Colonic mucosa (tissue), 4 donors: ENCODE measurements at regions of chr2 and their contacts with region 1.

Region 1: DNA sequence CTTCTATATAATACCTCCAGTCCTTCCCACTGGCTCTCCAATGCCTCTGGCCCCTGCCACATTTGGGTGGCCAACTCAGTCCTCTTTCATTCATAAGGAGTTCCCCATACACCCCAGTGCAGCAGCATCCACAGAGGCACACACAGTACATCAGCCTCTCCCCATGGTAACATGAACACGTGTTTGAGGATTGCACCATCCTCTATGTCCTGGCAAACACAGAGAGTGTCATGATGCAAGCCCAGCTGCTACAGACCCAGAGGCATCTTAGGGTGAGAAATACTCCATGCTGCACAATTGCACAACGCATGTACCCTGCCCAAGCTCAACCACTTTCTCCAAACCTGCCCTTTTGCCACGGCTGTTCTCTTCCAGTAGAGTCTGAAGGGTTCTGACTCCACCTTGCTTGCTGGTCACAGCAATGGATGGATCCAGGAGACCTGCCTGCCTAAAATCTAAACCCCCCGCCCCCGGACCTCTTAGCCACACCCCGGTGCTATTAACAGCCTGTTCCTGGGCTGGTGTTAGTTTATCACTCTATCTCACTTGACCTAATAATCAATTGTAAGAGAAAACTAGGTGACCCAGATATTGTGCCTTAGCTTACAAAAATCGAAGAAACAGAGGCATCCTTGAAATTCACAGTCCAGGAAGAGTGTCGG is 11.4 kb downstream of the IGFBP5 start:
- DNase-seq: no peak
- H3K4me3 ChIP-seq: no peak overlapping the region
- H3K27ac ChIP-seq: peak overlapping the region; percentile 13
- H3K4me1 ChIP-seq: no peaks in the 10 kb centered on the region
- H3K27me3 ChIP-seq: no peaks in the 10 kb centered on the region
- CTCF ChIP-seq: no peak

Region 2: GRCh38 chr2:216590780-216591179 is 93.2 kb before region 1 on chr2:
- intact Hi-C with region 1: no loop called
- DNase-seq: peak; percentile 21
- H3K4me3 ChIP-seq: no peak overlapping the region
- H3K27ac ChIP-seq: no peak overlapping the region
- H3K4me1 ChIP-seq: no peaks in the 10 kb centered on the region
- H3K27me3 ChIP-seq: no peaks in the 10 kb centered on the region
- CTCF ChIP-seq: no peak

Region 3: DNA sequence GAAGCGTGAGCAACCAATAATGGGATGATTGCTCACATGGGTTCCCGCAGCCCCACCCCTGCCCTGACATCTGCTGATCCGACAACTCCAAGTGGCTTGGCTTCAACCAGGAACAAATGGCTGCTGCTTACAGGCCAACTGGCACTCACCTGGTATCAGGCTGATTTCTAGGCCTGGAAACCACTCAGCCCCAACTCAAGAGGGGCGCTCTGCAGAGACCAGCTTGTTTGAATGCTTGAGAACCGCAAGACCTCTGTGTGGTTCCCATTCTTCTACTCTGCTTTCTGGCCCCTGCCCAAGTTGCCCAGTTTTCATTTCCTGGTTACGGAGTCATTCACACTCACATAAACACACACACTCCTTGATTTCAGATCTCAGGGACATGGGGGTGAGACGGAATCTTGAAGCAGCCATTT is 123.9 kb after region 1 on chr2:
- intact Hi-C with region 1: no loop called
- DNase-seq: no peak
- H3K4me3 ChIP-seq: no peak overlapping the region
- H3K27ac ChIP-seq: no peak overlapping the region
- H3K4me1 ChIP-seq: no peaks in the 10 kb centered on the region
- H3K27me3 ChIP-seq: no peaks in the 10 kb centered on the region
- CTCF ChIP-seq: no peak

Region 4: GRCh38 chr2:217142649-217143266 is 458.8 kb after region 1 on chr2:
- intact Hi-C with region 1: loop called (anchors 5 kb)
- DNase-seq: peak; percentile 22
- H3K4me3 ChIP-seq: no peak overlapping the region
- H3K27ac ChIP-seq: no peak overlapping the region
- H3K4me1 ChIP-seq: no peaks in the 10 kb centered on the region
- H3K27me3 ChIP-seq: no peaks in the 10 kb centered on the region
- CTCF ChIP-seq: peak; percentile 49

Region 5: DNA sequence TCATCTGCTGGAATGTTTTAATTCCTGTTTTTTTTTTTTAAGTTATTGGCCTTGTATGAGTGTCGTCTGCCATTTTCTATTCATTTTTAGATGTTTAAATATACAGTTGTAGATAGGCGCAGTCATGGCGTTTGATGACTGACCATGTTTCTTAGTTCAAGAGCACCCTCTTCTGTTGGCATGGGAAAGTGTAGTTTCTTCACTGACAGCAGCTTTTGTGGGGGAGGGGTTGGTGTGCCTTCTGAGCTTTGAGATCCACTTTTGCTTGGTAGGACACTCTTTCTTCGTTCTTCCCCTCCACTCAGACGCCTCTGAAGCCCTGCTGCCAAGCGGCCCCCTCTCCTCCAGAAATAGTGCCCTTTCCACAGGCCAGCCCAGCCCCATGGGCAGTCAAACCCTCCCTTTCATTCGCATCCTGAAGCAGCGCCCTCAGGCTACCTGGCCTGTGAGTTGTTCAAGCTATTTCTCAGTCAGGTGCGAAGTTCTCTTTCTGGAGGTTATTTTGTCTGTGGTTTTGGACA is 826.9 kb after region 1 on chr2:
- intact Hi-C with region 1: loop called (anchors 5 kb)
- DNase-seq: peak; percentile 50
- H3K4me3 ChIP-seq: no peak overlapping the region
- H3K27ac ChIP-seq: no peak overlapping the region
- H3K4me1 ChIP-seq: no peaks in the 10 kb centered on the region
- H3K27me3 ChIP-seq: no peaks in the 10 kb centered on the region
- CTCF ChIP-seq: peak; percentile 28

Region 6: DNA sequence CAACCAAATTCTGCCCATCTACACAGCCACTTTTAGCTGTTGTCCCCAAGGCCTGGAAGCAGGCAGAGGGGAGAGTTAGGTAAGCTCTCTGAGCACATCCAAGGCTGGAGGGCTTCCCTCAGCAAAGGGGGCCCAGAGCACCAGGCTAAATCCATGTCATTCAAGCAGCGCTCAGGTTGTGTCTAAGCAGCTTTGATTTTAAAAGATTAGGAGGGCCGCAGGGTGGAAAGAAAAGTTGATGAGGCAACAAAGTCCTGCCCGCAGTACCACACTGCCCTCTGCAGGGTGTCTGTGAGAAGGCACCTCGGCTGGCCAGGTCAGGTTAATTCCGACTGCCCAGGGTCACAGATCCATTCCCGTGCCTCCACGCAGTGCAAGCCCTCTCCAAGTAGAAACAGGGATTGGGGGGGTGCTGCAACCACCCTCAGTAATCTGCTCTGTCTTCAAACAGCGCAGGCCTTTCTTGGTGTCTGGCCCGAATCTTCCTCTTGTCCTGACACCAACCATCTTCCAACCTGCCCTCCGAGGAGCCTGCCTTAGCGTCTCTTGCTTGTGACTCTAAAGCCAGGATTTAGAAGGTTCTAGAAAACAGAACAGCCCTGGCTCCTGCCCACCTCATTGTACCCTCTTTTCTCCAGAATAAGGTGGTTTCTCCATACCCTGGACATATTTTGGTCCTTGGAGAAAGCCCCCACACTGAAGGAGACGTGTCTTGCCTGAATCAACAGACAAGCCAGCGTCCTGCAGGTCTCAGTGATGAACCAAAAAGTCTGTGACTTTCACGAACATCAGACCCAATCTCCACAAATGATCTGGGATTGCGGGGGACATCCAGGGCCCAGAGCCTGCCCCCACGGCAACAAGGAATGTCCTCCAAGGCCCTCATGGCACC is 1029.7 kb after region 1 on chr2:
- intact Hi-C with region 1: loop called (anchors 2 kb)
- DNase-seq: peak; percentile 77
- H3K4me3 ChIP-seq: no peak overlapping the region
- H3K27ac ChIP-seq: no peak overlapping the region
- H3K4me1 ChIP-seq: no peaks in the 10 kb centered on the region
- H3K27me3 ChIP-seq: no peaks in the 10 kb centered on the region
- CTCF ChIP-seq: peak; percentile 86